Mammary epithelial cell (primary cell): ENCODE measurements at regions of chr6 and their contacts with region 1.

Region 1: DNA sequence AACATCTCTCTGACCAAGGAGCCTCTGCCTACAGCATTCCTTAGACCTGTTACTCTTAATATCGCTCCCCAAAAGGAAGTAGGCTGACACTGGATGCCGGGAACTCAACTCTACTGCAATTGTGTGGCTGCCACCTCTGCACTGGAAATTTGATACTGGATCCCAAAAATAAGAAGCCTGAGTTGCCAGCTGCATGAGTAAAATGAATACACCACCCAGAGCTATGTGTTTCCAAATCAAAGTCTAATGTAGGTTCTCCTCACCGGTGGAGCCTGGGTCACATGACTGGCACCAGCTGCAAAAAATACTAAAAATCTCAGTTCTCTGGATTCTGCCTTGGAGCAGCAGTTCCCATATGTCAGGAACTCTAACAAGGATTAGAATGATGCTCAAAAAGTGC is 36.8 kb downstream of the UNC5CL start:
- DNase-seq: no peak
- H3K4me3 ChIP-seq: no peak overlapping the region
- H3K27ac ChIP-seq: no peak overlapping the region
- H3K4me1 ChIP-seq: peaks cover 6% of the 10 kb centered on the region
- H3K27me3 ChIP-seq: no peaks in the 10 kb centered on the region
- CTCF ChIP-seq: no peak

Region 2: GRCh38 chr6:41039060-41039998 is 37.1 kb after region 1 on chr6 and contains the start of gene UNC5CL:
- CTCF ChIA-PET with region 1: no interaction called
- dilution Hi-C with region 1: no loop called
- in situ Hi-C with region 1: no loop called
- intact Hi-C with region 1: loop called (anchors 1 kb)
- DNase-seq: peak; percentile 57
- H3K4me3 ChIP-seq: no peak within 1 kb of the TSS
- H3K27ac ChIP-seq: no peak within 1 kb of the TSS
- H3K4me1 ChIP-seq: peaks cover 43% of the 10 kb centered on the region
- H3K27me3 ChIP-seq: no peaks in the 10 kb centered on the region
- CTCF ChIP-seq: peak; percentile 87 to 93
- total RNA-seq, gene UNC5CL: 0.50 to 0.54 TPM

Region 3: GRCh38 chr6:41066867-41067304 is 64.7 kb after region 1 on chr6:
- CTCF ChIA-PET with region 1: no interaction called
- dilution Hi-C with region 1: no loop called
- in situ Hi-C with region 1: no loop called
- intact Hi-C with region 1: loop called (anchors 1 kb)
- DNase-seq: peak; percentile 43
- H3K4me3 ChIP-seq: no peak overlapping the region
- H3K27ac ChIP-seq: no peak overlapping the region
- H3K4me1 ChIP-seq: peaks cover 11% of the 10 kb centered on the region
- H3K27me3 ChIP-seq: no peaks in the 10 kb centered on the region
- CTCF ChIP-seq: peak; percentile 76 to 82